GM10248 (cell line): ENCODE measurements at regions of chr7 and their contacts with region 1.

Region 1: GRCh38 chr7:75533926-75534325 is 41.8 kb downstream of the SPDYE5 start:
- DNase-seq: no peak
- CTCF ChIP-seq: no peak

Region 2: GRCh38 chr7:74656837-74657691 is 876.9 kb before region 1 on chr7:
- CTCF ChIA-PET with region 1: no interaction called
- POLR2A ChIA-PET with region 1: interaction called, 11 read pairs
- DNase-seq: peak; percentile 93
- CTCF ChIP-seq: no peak

Region 3: GRCh38 chr7:75611548-75612178 is 77.7 kb after region 1 on chr7:
- CTCF ChIA-PET with region 1: no interaction called
- POLR2A ChIA-PET with region 1: no interaction called
- DNase-seq: no peak
- CTCF ChIP-seq: no peak

Region 4: GRCh38 chr7:75861636-75862035 is 327.7 kb after region 1 on chr7:
- CTCF ChIA-PET with region 1: no interaction called
- POLR2A ChIA-PET with region 1: no interaction called
- DNase-seq: no peak
- CTCF ChIP-seq: no peak